Mammary epithelial cell (primary cell): ENCODE measurements at regions of chr1 and their contacts with region 1.

Region 1: GRCh38 chr1:99490031-99490430 is 155.9 kb upstream of the PALMD start:
- DNase-seq: no peak
- H3K4me3 ChIP-seq: no peak overlapping the region
- H3K27ac ChIP-seq: no peak overlapping the region
- H3K4me1 ChIP-seq: no peaks in the 10 kb centered on the region
- H3K27me3 ChIP-seq: no peaks in the 10 kb centered on the region
- CTCF ChIP-seq: no peak

Region 2: DNA sequence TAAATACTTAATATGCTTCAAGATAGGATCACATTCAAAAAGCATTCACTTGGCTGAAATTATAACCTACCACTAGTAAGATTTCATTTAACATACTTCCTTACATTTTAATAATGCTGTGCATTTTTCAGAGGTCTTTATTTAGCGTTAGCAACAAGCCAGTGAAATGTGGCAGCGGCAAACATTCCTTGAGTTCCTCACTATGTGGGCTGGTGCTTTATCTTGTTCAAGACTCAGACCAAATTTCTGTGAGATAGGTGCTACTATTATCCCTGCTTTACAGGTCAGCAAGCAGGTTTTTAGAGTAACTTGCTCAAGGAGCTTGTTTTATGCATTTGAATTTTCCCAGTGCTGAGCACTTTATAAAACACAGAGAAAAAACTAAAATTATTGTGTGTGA is 93.0 kb before region 1 on chr1:
- CTCF ChIA-PET with region 1: no interaction called
- dilution Hi-C with region 1: loop called (anchors 5 kb)
- in situ Hi-C with region 1: no loop called
- intact Hi-C with region 1: no loop called
- DNase-seq: no peak
- H3K4me3 ChIP-seq: no peak overlapping the region
- H3K27ac ChIP-seq: no peak overlapping the region
- H3K4me1 ChIP-seq: no peaks in the 10 kb centered on the region
- H3K27me3 ChIP-seq: peaks cover 6% of the 10 kb centered on the region
- CTCF ChIP-seq: no peak